Dorsolateral prefrontal cortex (tissue), 120 donors: ENCODE measurements at regions of chr18 and their contacts with region 1.

Region 1: DNA sequence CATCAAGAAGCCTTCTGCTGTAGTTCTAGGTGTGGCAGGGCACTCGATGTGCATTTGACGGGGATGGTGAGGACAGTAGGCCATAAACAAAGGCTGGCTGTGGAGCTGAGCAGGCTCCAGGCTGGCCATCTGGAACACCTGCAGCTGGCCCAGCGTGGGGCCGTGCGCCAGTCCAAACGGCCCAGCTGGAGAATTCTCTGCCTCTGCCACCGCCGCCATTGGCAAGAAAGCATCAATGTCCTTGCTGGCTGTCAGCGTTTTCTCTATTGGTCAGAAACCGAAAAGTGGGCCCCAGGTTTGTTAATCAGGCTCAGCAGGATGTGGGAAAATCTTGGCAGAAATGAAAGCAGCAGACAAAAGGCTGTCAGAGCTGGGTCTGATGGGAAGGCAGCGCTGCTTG is 24.0 kb upstream of the CTIF start:
- DNase-seq: peak; percentile 55 to 82 (median 75)
- H3K4me3 ChIP-seq: peak overlapping the region in 3 of 59 donors; percentile 14 to 30 (median 15)
- H3K27ac ChIP-seq: peak overlapping the region in 57 of 59 donors; percentile 14 to 95 (median 79)
- H3K27me3 ChIP-seq: no peaks in the 10 kb centered on the region
- CTCF ChIP-seq: peak in 9 of 56 donors; percentile 6 to 29 (median 14)

Region 2: DNA sequence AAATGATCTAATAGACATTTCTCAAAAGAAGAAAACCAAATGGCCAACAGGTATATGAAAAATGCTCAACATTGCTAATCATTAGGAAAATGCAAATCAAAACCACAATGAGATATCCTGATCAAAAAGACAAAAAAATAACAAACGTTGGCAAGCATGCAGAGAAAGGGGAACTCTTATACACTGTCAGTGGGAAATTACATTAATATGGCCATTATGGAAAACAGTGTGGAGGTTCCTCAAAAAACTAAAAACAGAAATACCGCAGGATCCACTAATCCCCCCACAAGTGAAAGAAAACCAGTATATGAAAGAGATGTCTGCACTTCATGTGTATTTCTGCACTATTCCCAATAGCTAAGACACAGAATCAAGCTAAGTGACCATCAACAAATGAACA is 33.7 kb before region 1 on chr18:
- intact Hi-C with region 1: loop called in 1 of 2 experiments (anchors 5 kb)
- DNase-seq: no peak
- H3K4me3 ChIP-seq: no peak overlapping the region
- H3K27ac ChIP-seq: no peak overlapping the region
- H3K27me3 ChIP-seq: peaks cover 0 to 3% (median 0%) of the 10 kb centered on the region in 45 donors
- CTCF ChIP-seq: no peak